OCI-LY7 (cell line): ENCODE measurements at regions of chr17 and their contacts with region 1.

Region 1: DNA sequence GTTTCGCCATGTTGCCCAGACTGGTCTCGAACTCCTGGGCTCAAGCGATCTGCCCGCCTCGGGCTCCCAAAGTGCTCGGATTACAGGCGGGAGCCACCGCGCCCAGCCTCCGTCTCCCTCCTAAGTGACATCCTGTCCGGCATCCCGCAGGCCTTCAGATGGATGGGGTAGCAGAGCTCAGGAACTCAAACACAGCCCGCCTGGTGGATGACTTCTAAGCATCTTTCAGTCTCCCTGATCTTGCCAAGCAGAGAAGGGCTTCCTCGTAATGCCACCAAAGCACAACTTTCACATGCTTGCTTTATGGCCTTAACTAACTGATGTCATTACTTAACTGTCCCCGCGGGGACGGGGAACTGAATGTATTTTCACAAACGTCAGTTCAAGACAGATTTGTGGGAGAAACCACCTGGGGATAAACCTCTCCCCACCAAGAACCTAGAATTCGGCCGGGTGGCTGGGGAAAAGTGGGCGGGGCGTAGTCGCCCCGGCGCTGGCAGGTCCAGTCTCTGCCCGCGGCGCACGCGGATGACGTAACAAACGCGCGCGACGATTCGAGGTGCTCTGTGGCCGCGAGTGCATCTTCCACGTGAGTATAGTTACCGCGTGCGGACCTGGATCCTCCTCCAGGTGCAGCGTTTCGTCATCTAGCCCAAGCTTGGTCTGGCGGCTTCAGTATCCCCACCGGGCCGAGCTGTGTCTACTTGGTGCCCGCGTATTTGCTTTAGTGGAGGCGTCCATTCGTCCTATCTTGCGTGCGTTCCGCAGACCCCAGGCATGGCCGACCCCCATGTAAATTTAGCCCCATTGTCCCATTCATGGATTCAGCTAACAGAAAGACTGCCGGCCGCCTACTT is at the start of gene PFAS:
- DNase-seq: peak; percentile 97
- H3K4me3 ChIP-seq: peak within 1 kb of the TSS; percentile 87
- H3K27ac ChIP-seq: peak within 1 kb of the TSS; percentile 99
- H3K4me1 ChIP-seq: peaks cover 39% of the 10 kb centered on the region
- CTCF ChIP-seq: no peak
- total RNA-seq, gene PFAS: 114 and 122 TPM in 2 replicates

Region 2: GRCh38 chr17:8189711-8190477 is 59.1 kb before region 1 on chr17 and contains the start of gene BORCS6:
- CTCF ChIA-PET with region 1: no interaction called
- POLR2A ChIA-PET with region 1: interaction called, 14 read pairs
- intact Hi-C with region 1: loop called (anchors 1 kb)
- DNase-seq: peak; percentile 99
- H3K4me3 ChIP-seq: peak within 1 kb of the TSS; percentile 83
- H3K27ac ChIP-seq: peak within 1 kb of the TSS; percentile 92
- H3K4me1 ChIP-seq: peaks cover 39% of the 10 kb centered on the region
- CTCF ChIP-seq: peak; percentile 52
- total RNA-seq, gene BORCS6: 13.9 and 14.3 TPM in 2 replicates

Region 3: GRCh38 chr17:8209909-8210760 is 38.8 kb before region 1 on chr17 and contains the start of gene AURKB:
- CTCF ChIA-PET with region 1: interaction called, 3 read pairs
- POLR2A ChIA-PET with region 1: interaction called, 6 read pairs
- intact Hi-C with region 1: loop called (anchors 5 kb)
- DNase-seq: peak; percentile 96
- H3K4me3 ChIP-seq: peak within 1 kb of the TSS; percentile 92
- H3K27ac ChIP-seq: peak within 1 kb of the TSS; percentile 88
- H3K4me1 ChIP-seq: peaks cover 19% of the 10 kb centered on the region
- CTCF ChIP-seq: no peak
- total RNA-seq, gene AURKB: 248 and 283 TPM in 2 replicates

Region 4: GRCh38 chr17:8222630-8223356 is 26.2 kb before region 1 on chr17:
- CTCF ChIA-PET with region 1: interaction called, 15 read pairs
- POLR2A ChIA-PET with region 1: interaction called, 49 read pairs
- intact Hi-C with region 1: loop called (anchors 1 kb)
- DNase-seq: peak; percentile 89
- H3K4me3 ChIP-seq: peak overlapping the region; percentile 80
- H3K27ac ChIP-seq: peak overlapping the region; percentile 88
- H3K4me1 ChIP-seq: peaks cover 21% of the 10 kb centered on the region
- CTCF ChIP-seq: no peak

Region 5: GRCh38 chr17:8294814-8295316 is 45.9 kb after region 1 on chr17:
- CTCF ChIA-PET with region 1: interaction called, 3 read pairs
- POLR2A ChIA-PET with region 1: interaction called, 20 read pairs
- intact Hi-C with region 1: loop called (anchors 2 kb)
- DNase-seq: no peak
- H3K4me3 ChIP-seq: peak overlapping the region; percentile 80
- H3K27ac ChIP-seq: peak overlapping the region; percentile 63
- H3K4me1 ChIP-seq: peaks cover 26% of the 10 kb centered on the region
- CTCF ChIP-seq: no peak

Region 6: GRCh38 chr17:8300627-8301242 is 51.8 kb after region 1 on chr17:
- CTCF ChIA-PET with region 1: no interaction called
- POLR2A ChIA-PET with region 1: interaction called, 20 read pairs
- intact Hi-C with region 1: loop called (anchors 2 kb)
- DNase-seq: peak; percentile 87
- H3K4me3 ChIP-seq: no peak overlapping the region
- H3K27ac ChIP-seq: peak overlapping the region; percentile 4
- H3K4me1 ChIP-seq: peaks cover 6% of the 10 kb centered on the region
- CTCF ChIP-seq: peak; percentile 94

Region 7: GRCh38 chr17:8311131-8311790 is 62.3 kb after region 1 on chr17:
- CTCF ChIA-PET with region 1: no interaction called
- POLR2A ChIA-PET with region 1: no interaction called
- intact Hi-C with region 1: no loop called
- DNase-seq: no peak
- H3K4me3 ChIP-seq: no peak overlapping the region
- H3K27ac ChIP-seq: no peak overlapping the region
- H3K4me1 ChIP-seq: no peaks in the 10 kb centered on the region
- CTCF ChIP-seq: no peak

Region 8: GRCh38 chr17:8383143-8383822 is 134.3 kb after region 1 on chr17 and contains the start of gene RPL26:
- CTCF ChIA-PET with region 1: interaction called, 4 read pairs
- POLR2A ChIA-PET with region 1: no interaction called
- intact Hi-C with region 1: loop called (anchors 5 kb)
- DNase-seq: peak; percentile 100
- H3K4me3 ChIP-seq: peak within 1 kb of the TSS; percentile 78
- H3K27ac ChIP-seq: peak within 1 kb of the TSS; percentile 67
- H3K4me1 ChIP-seq: peaks cover 44% of the 10 kb centered on the region
- CTCF ChIP-seq: peak; percentile 99
- total RNA-seq, gene RPL26: 4,013 and 5,038 TPM in 2 replicates